Ovary (tissue), 10 donors: ENCODE measurements at regions of chr2 and their contacts with region 1.

Region 1: DNA sequence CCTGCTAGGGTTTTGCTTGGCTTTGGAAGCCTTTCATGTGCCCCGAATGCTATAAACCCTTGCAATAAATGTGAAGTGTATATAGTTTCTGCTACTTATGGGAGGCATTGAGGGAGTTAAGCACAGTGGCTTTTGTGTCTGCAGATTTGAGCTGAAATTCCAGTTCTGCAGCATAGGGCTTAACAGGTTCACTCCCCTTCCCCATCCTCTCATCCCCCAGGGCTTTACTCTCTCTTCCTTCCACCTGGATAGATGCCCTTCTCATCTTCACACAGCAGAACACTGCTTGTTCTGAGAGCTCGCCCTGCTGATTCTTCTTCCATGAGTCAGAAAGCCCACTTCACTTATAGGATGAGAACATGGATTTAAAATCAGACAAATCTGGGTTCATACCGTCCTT is 37.2 kb downstream of the SOX11 start:
- DNase-seq: no peak
- H3K4me3 ChIP-seq: no peak overlapping the region
- H3K27ac ChIP-seq: no peak overlapping the region
- H3K4me1 ChIP-seq: no peaks in the 10 kb centered on the region
- H3K27me3 ChIP-seq: no peaks in the 10 kb centered on the region
- CTCF ChIP-seq: no peak
- EP300 ChIP-seq: no peak
- POLR2A ChIP-seq: no peak

Region 2: DNA sequence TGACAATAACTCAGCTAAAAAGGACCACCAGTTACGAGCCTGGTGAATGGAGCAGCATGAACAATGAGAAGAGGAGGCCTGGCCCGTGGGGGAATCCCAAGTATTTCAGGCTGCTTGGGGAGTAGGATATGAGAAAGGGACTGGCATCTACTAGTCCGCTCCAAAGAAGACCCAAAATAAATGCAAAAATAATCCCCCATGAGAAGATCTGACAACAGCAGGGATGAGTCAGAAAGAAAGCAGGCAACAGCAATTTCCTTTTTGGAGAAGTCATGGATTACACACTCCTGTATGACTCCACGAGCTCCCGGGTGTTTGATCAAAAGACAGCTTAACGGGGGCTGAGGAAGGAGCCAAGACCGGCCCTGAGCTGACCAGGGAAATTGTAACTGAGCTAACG is 74.1 kb after region 1 on chr2:
- intact Hi-C with region 1: loop called in 1 of 4 experiments (anchors 2 kb)
- DNase-seq: no peak
- H3K4me3 ChIP-seq: no peak overlapping the region
- H3K27ac ChIP-seq: no peak overlapping the region
- H3K4me1 ChIP-seq: no peaks in the 10 kb centered on the region
- H3K27me3 ChIP-seq: no peaks in the 10 kb centered on the region
- CTCF ChIP-seq: no peak
- EP300 ChIP-seq: no peak
- POLR2A ChIP-seq: no peak

Region 3: DNA sequence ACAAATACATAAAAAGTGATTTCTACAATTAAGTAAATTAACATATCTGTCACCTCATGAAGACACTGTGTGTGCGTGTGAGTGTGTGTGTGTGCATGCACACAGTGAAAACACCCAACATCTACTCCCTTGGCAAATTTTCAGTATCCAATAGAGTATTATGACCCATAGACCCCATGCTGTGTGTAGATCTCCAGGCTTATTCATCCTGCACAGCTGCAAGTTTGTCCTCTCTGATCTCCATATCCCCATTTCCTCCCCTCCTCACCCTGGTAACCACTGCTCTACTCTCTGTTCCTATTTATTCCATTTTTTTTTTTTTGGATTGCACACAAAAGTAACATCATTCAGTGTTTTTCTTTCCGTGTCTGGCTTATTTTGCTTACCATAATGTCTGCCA is 353.7 kb after region 1 on chr2:
- intact Hi-C with region 1: no loop called
- DNase-seq: no peak
- H3K4me3 ChIP-seq: no peak overlapping the region
- H3K27ac ChIP-seq: no peak overlapping the region
- H3K4me1 ChIP-seq: no peaks in the 10 kb centered on the region
- H3K27me3 ChIP-seq: no peaks in the 10 kb centered on the region
- CTCF ChIP-seq: no peak
- EP300 ChIP-seq: no peak
- POLR2A ChIP-seq: no peak